Thyroid gland (tissue), 4 donors: ENCODE measurements at regions of chr10 and their contacts with region 1.

Region 1: DNA sequence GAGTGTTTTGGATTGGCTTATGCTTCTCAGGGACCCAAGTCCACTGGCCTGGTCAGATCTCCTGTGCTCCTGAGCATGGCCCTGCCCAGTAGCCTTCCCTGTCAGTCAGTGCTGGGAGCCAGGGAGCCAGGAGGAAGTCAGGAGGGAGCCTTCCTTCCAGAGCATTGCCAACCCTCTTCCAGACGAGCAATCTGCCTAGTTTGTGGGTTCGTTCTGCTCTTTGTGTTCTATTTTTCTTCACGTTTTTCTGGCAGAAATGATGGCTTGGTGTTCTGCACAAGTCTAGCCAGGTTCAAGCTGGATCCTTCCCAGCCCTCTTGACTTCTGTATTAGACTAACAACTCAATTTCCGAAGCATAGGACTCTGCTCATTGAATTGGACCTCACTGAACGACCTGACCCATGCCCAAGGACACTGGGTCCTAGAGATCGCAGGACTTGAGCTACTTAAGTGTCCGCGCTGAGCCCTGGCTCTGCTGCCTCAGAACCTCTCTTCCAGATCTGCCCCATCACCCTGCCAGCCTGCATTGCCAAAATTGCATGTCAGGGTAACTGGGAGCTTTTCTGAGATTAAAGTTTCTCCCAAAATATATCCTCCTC is 76.2 kb upstream of the MPP7 start:
- DNase-seq: peak; percentile 68 to 83
- H3K4me3 ChIP-seq: no peak overlapping the region
- H3K27ac ChIP-seq: peak overlapping the region in 2 of 3 donors; percentile 17 to 55
- H3K4me1 ChIP-seq: peaks cover 0 to 8% of the 10 kb centered on the region in 2 donors
- H3K27me3 ChIP-seq: no peaks in the 10 kb centered on the region
- CTCF ChIP-seq: no peak
- POLR2A ChIP-seq: no peak

Region 2: DNA sequence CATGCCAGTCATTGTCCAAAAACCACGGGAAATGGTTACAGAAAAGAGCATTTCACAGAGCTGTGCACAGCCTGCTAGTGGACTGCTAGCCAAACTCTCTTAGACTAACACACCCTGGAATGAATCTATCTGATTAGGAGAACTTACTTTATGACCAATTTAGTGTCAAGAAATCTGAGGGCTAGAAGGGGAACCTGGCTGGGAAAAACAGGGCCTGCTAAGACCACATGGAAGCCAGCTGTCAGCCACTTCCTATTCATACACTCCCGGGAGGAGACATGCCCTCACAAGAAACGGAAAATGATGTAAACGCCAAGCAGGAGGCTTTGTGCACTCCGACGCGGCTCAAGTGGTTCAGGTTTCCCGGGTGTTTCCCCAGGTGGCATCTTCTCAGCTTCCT is 131.0 kb before region 1 on chr10:
- intact Hi-C with region 1: loop called (anchors 2 kb)
- DNase-seq: no peak
- H3K4me3 ChIP-seq: no peak overlapping the region
- H3K27ac ChIP-seq: no peak overlapping the region
- H3K4me1 ChIP-seq: no peaks in the 10 kb centered on the region
- H3K27me3 ChIP-seq: no peaks in the 10 kb centered on the region
- CTCF ChIP-seq: no peak
- POLR2A ChIP-seq: no peak

Region 3: DNA sequence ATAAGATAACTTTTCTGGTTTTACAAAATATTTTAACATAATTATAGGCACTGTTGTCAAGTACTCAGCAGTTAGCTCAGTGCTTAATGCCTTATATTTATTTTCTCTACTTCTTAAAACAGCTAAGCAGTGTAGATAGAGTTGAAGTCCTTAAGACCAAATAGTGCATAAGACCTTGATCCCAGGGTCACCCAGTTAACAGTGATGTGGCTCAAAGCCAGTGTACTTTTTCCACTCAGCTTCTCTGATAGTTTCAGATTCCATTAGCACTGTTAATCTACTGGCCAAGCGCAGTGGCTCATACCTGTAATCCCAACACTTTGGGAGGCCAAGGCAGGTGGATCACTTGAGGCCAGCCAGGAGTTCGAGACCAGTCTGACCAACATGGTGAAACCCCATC is 237.4 kb after region 1 on chr10:
- intact Hi-C with region 1: no loop called
- DNase-seq: no peak
- H3K4me3 ChIP-seq: no peak overlapping the region
- H3K27ac ChIP-seq: no peak overlapping the region
- H3K4me1 ChIP-seq: no peaks in the 10 kb centered on the region
- H3K27me3 ChIP-seq: no peaks in the 10 kb centered on the region
- CTCF ChIP-seq: no peak
- POLR2A ChIP-seq: no peak